GM13977 (cell line): ENCODE measurements at regions of chrX and their contacts with region 1.

Region 1: GRCh38 chrX:74924449-74925225 is 615 bp downstream of the NEXMIF start:
- DNase-seq: peak; percentile 58
- CTCF ChIP-seq: no peak

Region 2: DNA sequence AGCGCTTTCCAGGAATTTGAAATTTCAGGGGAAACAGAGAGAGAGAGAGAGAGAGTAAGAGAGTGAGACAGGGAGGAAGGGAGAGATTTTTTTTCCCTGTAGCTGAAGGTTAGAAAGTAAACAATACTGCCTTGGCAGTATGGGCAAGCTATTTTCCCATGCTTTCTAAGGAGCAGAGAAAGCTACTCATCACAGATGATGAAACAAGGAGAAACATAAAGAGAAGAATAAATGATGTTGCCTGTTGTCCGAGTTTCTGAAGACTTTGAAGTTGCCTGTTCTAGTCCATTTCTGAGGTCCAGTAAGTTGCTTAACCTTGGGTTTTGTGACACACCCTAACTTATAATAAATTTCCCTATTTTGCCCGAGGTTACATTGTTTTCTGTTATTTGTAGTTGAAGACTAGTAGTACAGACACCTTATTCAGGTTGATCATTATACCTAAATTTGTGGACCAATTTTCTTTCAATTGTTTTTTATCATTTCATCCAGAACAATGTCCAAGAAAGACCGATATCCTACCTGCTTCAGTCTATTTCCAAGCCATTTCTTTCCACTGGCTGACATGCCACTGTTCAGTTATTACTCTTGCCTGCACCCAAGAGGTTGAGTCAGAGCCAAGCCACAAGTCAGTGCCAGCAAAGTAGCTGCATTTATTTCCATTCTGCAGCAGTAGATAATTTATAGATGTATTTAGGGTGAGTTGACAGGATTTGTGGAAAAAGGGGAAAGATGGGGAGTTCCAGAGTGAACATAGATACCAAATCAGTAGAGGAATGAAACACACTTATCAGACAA is 553.0 kb before region 1 on chrX:
- in situ Hi-C with region 1: no loop called
- DNase-seq: no peak
- CTCF ChIP-seq: no peak

Region 3: DNA sequence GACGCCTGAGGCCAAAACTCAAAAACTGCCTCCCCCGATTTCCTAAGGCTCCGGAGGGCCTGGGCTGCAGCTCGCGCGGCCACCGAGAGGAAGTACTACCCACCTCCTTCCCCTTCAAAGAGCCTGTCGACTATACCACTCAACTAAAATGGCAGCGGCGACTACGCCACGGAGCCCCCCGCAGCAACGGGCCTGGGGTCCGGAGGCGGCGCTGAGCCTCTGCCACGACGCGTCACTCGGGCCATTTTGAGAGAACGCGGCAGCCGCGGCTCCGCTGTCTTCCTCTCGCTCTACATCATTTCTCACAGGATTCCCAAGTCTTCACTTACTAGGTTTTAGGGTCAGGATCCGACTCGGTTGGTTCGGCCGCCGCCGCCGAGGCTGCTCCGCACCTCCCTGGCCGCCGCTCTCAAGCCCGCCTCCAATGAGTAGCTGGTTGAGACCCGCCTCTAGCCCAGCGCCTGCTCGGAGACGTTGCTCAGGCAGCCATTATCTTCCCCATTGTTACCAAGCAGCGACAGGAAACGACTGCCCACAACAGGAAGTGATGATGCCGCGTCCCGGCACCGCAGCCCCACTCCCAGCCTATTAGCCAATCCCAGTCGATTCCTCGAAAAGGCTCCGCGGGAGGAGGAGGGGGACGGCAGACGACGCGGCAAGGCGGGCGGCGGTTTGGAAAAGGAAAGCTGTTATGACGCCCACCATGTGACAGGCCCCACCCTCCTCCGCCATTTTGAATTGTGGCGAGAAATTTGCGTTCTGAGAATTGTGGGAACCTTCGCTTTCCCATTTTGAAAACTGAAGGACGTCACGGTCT is 310.3 kb before region 1 on chrX and contains the start of gene RLIM:
- in situ Hi-C with region 1: loop called (anchors 25 kb)
- DNase-seq: peak; percentile 83
- CTCF ChIP-seq: no peak